Naive thymus-derived CD4-positive, alpha-beta T cell (primary cell): ENCODE measurements at regions of chr22 and their contacts with region 1.

Region 1: DNA sequence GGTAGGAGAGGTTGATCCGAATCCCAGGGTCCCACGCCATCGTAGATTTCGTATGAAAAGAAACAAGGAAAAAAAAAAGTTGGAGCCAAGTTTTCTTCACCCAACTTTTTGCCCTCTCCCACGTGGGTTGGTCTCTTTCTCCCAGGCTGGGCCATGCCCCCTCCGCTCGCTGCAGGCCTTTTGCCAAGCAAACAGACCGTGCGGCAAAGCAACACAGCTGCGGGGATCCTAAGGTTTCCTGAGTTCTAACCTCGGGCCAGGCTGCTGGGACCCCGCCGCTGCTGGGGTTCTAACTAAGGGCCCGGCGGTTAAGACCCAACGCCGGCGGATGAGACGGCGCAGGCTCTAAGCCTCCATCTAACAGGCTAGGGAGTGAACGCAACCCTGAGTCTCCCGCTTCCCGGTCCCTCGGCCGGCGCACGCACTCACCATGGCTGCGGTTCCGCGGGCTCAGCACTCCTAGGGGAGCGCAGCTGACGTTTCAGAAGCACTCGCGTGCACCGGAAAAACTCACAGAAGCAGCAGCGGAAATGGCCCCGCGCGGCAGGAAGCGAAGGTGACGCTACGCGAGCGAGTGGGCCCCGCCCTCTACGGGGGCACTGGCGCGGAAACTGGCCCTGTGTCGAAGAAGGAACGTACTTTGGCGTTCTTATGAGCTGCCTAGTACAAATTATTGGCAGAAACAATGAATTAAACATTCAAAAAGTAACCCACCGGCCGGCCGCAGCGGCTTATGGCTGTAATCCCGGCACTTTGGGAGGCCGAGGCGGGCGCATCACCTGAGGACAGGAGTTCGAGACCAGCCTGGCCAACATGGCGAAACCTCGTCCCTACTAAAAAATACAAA is at the start of gene SNU13:
- DNase-seq: peak; percentile 79 to 94 (median 92)
- ATAC-seq: peak; percentile 97
- H3K4me3 ChIP-seq: peak within 1 kb of the TSS; percentile 98
- H3K4me3 Mint-ChIP-seq: peak within 1 kb of the TSS; percentile 90 to 100 (median 96)
- H3K27ac ChIP-seq: peak within 1 kb of the TSS; percentile 95
- H3K27ac Mint-ChIP-seq: peak within 1 kb of the TSS; percentile 94 to 100 (median 99)
- H3K4me1 ChIP-seq: peaks cover 12 to 13% of the 10 kb centered on the region in 2 donors
- H3K4me1 Mint-ChIP-seq: peaks cover 18 to 51% (median 37%) of the 10 kb centered on the region in 7 donors
- H3K27me3 ChIP-seq: no peaks in the 10 kb centered on the region
- H3K27me3 Mint-ChIP-seq: no peaks in the 10 kb centered on the region
- total RNA-seq, gene SNU13: 117 to 180 (median 122) TPM

Region 2: GRCh38 chr22:41532908-41533825 is 155.4 kb before region 1 on chr22:
- CTCF ChIA-PET with region 1: no interaction called
- POLR2A ChIA-PET with region 1: no interaction called
- intact Hi-C with region 1: no loop called
- DNase-seq: peak in 8 of 9 donors; percentile 39 to 68 (median 46)
- ATAC-seq: peak; percentile 83
- H3K4me3 ChIP-seq: no peak overlapping the region
- H3K4me3 Mint-ChIP-seq: no peak overlapping the region
- H3K27ac ChIP-seq: peak overlapping the region; percentile 42
- H3K27ac Mint-ChIP-seq: peak overlapping the region in 6 of 9 donors; percentile 31 to 76 (median 48)
- H3K4me1 ChIP-seq: no peaks in the 10 kb centered on the region
- H3K4me1 Mint-ChIP-seq: peaks cover 0 to 12% (median 4%) of the 10 kb centered on the region in 7 donors
- H3K27me3 ChIP-seq: no peaks in the 10 kb centered on the region
- H3K27me3 Mint-ChIP-seq: no peaks in the 10 kb centered on the region

Region 3: DNA sequence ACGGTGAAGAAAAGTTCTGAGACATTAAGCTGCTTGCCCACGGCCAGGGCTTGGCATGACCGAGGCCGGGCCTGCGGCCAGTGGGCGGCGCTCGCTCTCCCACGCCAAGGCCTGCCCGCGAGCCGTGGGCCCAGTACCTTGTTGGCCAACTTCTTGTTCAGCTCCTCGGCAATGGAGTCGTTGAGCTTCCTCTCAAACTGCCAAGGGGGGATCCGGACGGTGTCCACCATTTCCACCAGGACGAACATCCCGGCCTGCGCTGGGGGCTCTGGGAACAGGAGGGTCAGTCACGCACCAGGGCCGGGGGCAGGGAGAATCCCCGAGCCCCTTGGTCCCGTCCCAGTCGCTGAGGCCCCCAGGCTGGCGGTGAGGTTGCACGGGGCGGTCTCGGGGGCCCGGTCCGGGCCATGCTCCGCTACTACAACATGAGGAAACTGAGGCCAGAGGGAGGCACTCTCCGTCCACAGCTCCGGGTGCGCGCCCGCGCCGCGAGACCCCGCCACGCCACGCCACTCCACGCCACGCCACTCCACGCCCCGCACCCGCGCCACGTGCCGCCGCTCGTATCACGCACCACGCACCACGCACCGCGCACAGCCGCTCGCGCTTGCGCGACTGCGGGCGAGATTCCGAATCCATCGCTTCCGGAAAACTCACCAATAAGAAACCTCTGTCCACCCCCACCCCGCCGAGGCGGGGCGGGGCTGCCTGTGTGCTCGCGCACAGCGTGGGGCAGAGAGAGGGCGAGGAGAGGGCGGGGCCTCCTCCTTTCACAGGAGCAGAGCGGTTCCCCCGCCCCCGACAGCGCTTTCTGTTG is 144.5 kb before region 1 on chr22 and contains the start of gene POLR3H:
- CTCF ChIA-PET with region 1: no interaction called
- POLR2A ChIA-PET with region 1: no interaction called
- intact Hi-C with region 1: loop called in 1 of 2 experiments (anchors 1 kb)
- DNase-seq: peak; percentile 89 to 97 (median 95)
- ATAC-seq: peak; percentile 100
- H3K4me3 ChIP-seq: peak within 1 kb of the TSS; percentile 96
- H3K4me3 Mint-ChIP-seq: peak within 1 kb of the TSS; percentile 82 to 100 (median 97)
- H3K27ac ChIP-seq: peak within 1 kb of the TSS; percentile 84
- H3K27ac Mint-ChIP-seq: peak within 1 kb of the TSS; percentile 88 to 98 (median 95)
- H3K4me1 ChIP-seq: peaks cover 7 to 15% of the 10 kb centered on the region in 2 donors
- H3K4me1 Mint-ChIP-seq: peaks cover 30 to 52% (median 45%) of the 10 kb centered on the region in 7 donors
- H3K27me3 ChIP-seq: no peaks in the 10 kb centered on the region
- H3K27me3 Mint-ChIP-seq: no peaks in the 10 kb centered on the region
- total RNA-seq, gene POLR3H: 21.7 to 59.6 (median 28.5) TPM

Region 4: GRCh38 chr22:41666661-41667258 is 21.8 kb before region 1 on chr22:
- CTCF ChIA-PET with region 1: interaction called, 6 read pairs
- POLR2A ChIA-PET with region 1: interaction called, 30 read pairs
- intact Hi-C with region 1: loop called (anchors 1 kb)
- DNase-seq: peak; percentile 88 to 97 (median 95)
- ATAC-seq: peak; percentile 98
- H3K4me3 ChIP-seq: peak overlapping the region; percentile 44
- H3K4me3 Mint-ChIP-seq: peak overlapping the region; percentile 75 to 87 (median 82)
- H3K27ac ChIP-seq: peak overlapping the region; percentile 72
- H3K27ac Mint-ChIP-seq: peak overlapping the region; percentile 91 to 99 (median 97)
- H3K4me1 ChIP-seq: peaks cover 7% of the 10 kb centered on the region in 2 donors
- H3K4me1 Mint-ChIP-seq: peaks cover 0 to 25% (median 10%) of the 10 kb centered on the region in 7 donors
- H3K27me3 ChIP-seq: no peaks in the 10 kb centered on the region
- H3K27me3 Mint-ChIP-seq: no peaks in the 10 kb centered on the region

Region 5: DNA sequence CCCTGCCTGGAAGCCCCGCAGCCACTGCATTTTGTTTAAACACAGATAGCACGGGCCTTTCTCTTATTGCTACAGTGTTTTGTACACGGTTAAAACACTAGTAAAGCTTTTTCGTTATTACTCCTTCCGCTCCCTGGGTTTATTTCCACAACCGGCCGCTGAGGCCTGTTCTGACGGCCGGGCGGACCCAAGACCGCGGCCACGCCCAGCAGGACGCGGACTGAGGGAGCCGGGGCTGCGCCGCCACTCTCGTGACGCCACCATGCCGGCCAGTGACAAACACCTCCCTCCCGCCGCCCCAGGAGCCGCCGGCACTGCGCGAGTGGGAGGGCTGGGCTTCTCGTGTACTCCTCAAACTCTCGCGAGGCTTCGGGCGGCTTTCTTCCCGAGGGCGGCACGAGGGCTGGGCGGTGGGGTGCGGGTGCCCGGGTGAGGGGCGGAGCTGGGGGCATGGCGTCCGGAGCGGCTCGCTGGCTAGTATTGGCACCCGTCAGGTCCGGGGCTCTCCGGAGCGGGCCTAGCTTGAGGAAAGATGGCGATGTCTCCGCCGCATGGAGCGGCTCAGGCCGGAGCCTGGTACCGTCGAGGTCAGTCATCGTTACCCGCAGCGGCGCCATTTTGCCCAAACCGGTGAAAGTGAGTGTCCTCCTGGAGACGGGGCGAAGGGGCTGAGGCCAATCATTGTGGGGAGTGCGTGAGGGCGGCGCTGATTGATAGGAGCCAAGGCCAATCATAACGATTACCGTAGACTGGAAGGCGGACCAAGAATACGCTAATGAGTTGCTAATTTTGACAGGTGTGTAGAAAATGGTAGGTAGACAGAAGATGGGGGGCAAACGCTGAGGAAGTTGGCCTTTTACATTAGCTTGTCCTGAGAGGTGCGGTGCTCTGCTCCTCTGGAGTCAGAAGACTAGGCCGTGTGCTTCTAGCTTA is 391.0 kb after region 1 on chr22 and contains the start of gene SMDT1:
- CTCF ChIA-PET with region 1: no interaction called
- POLR2A ChIA-PET with region 1: interaction called, 4 read pairs
- intact Hi-C with region 1: loop called in 1 of 2 experiments (anchors 10 kb)
- DNase-seq: peak; percentile 96 to 100 (median 99)
- ATAC-seq: peak; percentile 94
- H3K4me3 ChIP-seq: peak within 1 kb of the TSS; percentile 98
- H3K4me3 Mint-ChIP-seq: peak within 1 kb of the TSS; percentile 94 to 99 (median 96)
- H3K27ac ChIP-seq: peak within 1 kb of the TSS; percentile 97
- H3K27ac Mint-ChIP-seq: peak within 1 kb of the TSS; percentile 96 to 99 (median 99)
- H3K4me1 ChIP-seq: peaks cover 10 to 16% of the 10 kb centered on the region in 2 donors
- H3K4me1 Mint-ChIP-seq: peaks cover 9 to 52% (median 43%) of the 10 kb centered on the region in 7 donors
- H3K27me3 ChIP-seq: no peaks in the 10 kb centered on the region
- H3K27me3 Mint-ChIP-seq: no peaks in the 10 kb centered on the region
- total RNA-seq, gene SMDT1: 40.4 to 105 (median 98.8) TPM